ENCODE measurements at regions of chr5 and their contacts with region 1.

Region 1: GRCh38 chr5:173823711-173824528 is 64.2 kb upstream of the CPEB4 start:
- DNase-seq: peak; percentile 91
- H3K4me3 ChIP-seq: no peak overlapping the region
- H3K4me3 Mint-ChIP-seq: peak overlapping the region; percentile 61
- H3K27ac Mint-ChIP-seq: peak overlapping the region; percentile 95
- H3K4me1 ChIP-seq: peaks cover 52% of the 10 kb centered on the region
- H3K4me1 Mint-ChIP-seq: peaks cover 49% of the 10 kb centered on the region
- H3K27me3 ChIP-seq: no peaks in the 10 kb centered on the region
- H3K27me3 Mint-ChIP-seq: no peaks in the 10 kb centered on the region
- CTCF ChIP-seq: no peak

Region 2: DNA sequence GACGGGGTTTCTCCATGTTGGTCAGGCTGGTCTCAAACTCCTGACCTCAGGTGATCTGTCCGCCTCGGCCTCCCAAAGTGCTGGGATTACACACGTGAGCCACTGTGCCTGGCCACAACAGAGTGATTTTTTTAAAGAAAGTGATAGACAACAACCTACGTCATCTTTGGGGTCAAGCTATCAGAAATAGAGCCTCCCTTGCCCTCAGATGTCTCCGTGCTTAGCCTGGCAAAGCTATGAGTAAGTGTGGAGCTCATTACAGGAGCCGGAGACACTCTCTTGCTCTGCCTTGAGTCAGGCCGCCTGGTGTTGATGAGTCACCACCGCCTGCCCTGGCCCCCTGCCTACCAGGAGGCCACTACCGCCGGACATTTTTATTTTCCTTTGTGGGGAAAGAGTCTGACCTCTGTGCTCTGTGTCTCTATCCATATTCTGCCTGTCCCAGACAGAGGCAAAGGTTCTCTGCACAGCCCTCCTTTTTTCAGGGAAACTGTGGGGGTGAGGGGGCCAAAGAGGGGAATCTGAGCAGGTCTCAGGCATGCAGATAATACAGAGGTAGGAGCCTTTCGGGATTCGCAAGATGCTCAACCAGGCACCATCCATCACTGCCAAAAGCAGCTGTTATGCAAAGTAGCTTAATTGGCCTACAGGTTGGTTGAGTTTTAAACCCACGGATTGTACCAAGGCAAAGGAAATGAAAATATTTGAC is 59.4 kb before region 1 on chr5:
- CTCF ChIA-PET with region 1: interaction called, 5 read pairs
- POLR2A ChIA-PET with region 1: interaction called, 5 read pairs
- intact Hi-C with region 1: loop called (anchors 1 kb)
- DNase-seq: peak; percentile 42 to 70
- H3K4me3 ChIP-seq: no peak overlapping the region
- H3K4me3 Mint-ChIP-seq: no peak overlapping the region
- H3K27ac Mint-ChIP-seq: no peak overlapping the region
- H3K4me1 ChIP-seq: peaks cover 40% of the 10 kb centered on the region
- H3K4me1 Mint-ChIP-seq: peaks cover 20% of the 10 kb centered on the region
- H3K27me3 ChIP-seq: no peaks in the 10 kb centered on the region
- H3K27me3 Mint-ChIP-seq: no peaks in the 10 kb centered on the region
- CTCF ChIP-seq: no peak

Region 3: GRCh38 chr5:173868076-173868880 is 44.4 kb after region 1 on chr5:
- CTCF ChIA-PET with region 1: interaction called, 4 read pairs
- POLR2A ChIA-PET with region 1: no interaction called
- intact Hi-C with region 1: loop called (anchors 1 kb)
- DNase-seq: peak in 1 of 2 experiments; percentile 40
- H3K4me3 ChIP-seq: no peak overlapping the region
- H3K4me3 Mint-ChIP-seq: no peak overlapping the region
- H3K27ac Mint-ChIP-seq: peak overlapping the region; percentile 65
- H3K4me1 ChIP-seq: peaks cover 19% of the 10 kb centered on the region
- H3K4me1 Mint-ChIP-seq: peaks cover 44% of the 10 kb centered on the region
- H3K27me3 ChIP-seq: no peaks in the 10 kb centered on the region
- H3K27me3 Mint-ChIP-seq: no peaks in the 10 kb centered on the region
- CTCF ChIP-seq: no peak

Region 4: DNA sequence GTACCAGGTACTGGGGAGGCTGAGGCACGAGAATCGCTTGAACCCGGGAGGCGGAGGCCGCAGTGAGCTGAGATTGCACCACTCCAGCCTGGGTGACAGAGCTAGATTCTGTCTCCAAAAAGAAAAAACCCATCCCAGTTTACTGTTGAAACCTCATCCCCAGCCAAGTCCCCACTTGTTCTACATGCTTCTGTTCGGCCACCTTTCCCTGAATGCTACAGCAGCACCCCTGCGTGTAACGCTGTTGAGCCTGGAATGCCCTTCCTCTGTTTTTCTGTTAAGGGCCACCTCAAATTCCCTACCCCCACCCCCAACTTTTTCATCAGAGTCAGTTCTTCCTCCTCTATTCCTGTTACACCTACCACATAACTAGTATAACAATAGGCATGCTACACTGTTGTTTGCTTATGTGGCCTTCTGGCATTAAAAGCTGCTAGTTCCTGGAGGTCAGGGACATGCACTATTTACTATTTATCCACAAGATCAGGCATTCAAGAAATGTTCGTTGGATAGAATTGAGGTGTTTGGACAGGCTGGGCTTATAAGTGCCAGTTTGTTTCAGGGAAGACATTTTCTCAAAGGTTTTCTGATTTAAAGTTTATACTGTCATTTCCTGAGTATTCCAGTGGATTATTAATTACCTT is 118.0 kb after region 1 on chr5:
- CTCF ChIA-PET with region 1: no interaction called
- POLR2A ChIA-PET with region 1: no interaction called
- intact Hi-C with region 1: loop called (anchors 1 kb)
- DNase-seq: no peak
- H3K4me3 ChIP-seq: no peak overlapping the region
- H3K4me3 Mint-ChIP-seq: no peak overlapping the region
- H3K27ac Mint-ChIP-seq: peak overlapping the region; percentile 57
- H3K4me1 ChIP-seq: peaks cover 67% of the 10 kb centered on the region
- H3K4me1 Mint-ChIP-seq: peaks cover 49% of the 10 kb centered on the region
- H3K27me3 ChIP-seq: no peaks in the 10 kb centered on the region
- H3K27me3 Mint-ChIP-seq: no peaks in the 10 kb centered on the region
- CTCF ChIP-seq: no peak

Region 5: DNA sequence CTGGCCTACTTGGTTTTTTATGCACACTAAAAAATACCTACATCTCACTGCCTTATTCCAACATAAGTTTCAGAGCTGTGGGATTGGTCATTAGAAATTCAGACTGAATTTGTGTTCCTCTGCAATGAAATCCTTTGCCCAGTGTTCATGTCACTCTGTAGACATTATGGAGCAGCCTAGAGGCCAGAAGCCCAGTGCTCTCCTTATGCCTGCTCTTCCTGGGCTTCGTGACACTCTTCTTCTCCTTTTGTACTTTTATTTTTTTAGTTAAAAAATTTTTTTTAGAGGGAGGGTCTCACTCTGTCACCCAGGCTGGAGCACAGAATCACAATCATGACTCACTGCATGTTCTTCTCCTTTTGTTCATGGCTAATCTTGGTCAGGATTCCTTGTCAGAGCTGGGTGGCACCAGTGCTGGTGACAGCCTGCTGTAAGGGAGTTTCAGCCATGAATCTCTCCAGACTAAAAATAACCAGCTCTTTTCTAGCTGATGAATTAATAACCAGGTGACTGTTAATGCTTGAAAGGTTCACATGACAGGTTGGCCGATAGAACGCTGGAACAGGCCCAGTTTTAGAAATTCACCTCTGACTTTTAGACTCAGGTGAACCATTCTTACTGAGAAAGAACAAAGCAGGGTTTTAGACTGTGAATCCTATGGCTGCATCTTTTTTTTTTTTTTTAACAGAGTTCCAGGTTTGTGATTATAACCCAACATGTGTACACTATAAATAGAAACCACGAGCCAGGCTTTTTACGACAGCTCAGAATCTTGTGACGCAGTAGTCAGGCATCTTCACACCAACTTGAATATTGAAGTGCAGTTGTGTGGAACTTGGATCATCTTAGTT is 131.0 kb after region 1 on chr5:
- CTCF ChIA-PET with region 1: no interaction called
- POLR2A ChIA-PET with region 1: no interaction called
- intact Hi-C with region 1: no loop called
- DNase-seq: no peak
- H3K4me3 ChIP-seq: no peak overlapping the region
- H3K4me3 Mint-ChIP-seq: no peak overlapping the region
- H3K27ac Mint-ChIP-seq: no peak overlapping the region
- H3K4me1 ChIP-seq: peaks cover 13% of the 10 kb centered on the region
- H3K4me1 Mint-ChIP-seq: peaks cover 14% of the 10 kb centered on the region
- H3K27me3 ChIP-seq: no peaks in the 10 kb centered on the region
- H3K27me3 Mint-ChIP-seq: no peaks in the 10 kb centered on the region
- CTCF ChIP-seq: no peak

Measured in Caco-2 (cell line).